ENCODE measurements at regions of chr7 and their contacts with region 1.

Region 1: DNA sequence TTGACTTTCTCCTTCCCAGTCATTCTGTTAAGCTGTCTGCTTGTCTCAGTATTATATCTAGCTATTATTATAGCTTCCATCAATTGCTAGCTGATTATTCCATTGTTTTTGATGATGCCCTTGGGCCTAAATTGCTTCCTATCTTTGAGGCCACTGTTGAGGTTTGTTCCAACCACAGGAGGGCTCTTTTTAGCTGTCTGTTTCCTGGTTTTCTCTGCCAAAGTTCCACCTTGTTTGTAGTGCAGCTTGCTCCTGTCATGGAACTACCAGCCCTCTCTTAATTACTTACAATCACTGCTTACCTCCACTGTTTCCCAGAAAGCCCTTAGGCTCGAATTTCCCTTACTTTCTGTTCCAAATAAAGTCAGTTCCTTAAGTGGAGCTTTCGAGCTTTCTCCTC is 118.7 kb upstream of the SEC61G start:
- DNase-seq: peak; percentile 39
- H3K4me3 Mint-ChIP-seq: no peak overlapping the region
- H3K27ac Mint-ChIP-seq: no peak overlapping the region
- H3K4me1 Mint-ChIP-seq: peaks cover 19% of the 10 kb centered on the region
- H3K27me3 Mint-ChIP-seq: no peaks in the 10 kb centered on the region
- CTCF ChIP-seq: peak; percentile 26

Region 2: GRCh38 chr7:54904130-54904529 is 26.4 kb after region 1 on chr7:
- CTCF ChIA-PET with region 1: interaction called, 12 read pairs
- POLR2A ChIA-PET with region 1: no interaction called
- intact Hi-C with region 1: no loop called
- DNase-seq: peak; percentile 39
- H3K4me3 Mint-ChIP-seq: no peak overlapping the region
- H3K27ac Mint-ChIP-seq: peak overlapping the region; percentile 25
- H3K4me1 Mint-ChIP-seq: peaks cover 8% of the 10 kb centered on the region
- H3K27me3 Mint-ChIP-seq: no peaks in the 10 kb centered on the region
- CTCF ChIP-seq: no peak

Region 3: DNA sequence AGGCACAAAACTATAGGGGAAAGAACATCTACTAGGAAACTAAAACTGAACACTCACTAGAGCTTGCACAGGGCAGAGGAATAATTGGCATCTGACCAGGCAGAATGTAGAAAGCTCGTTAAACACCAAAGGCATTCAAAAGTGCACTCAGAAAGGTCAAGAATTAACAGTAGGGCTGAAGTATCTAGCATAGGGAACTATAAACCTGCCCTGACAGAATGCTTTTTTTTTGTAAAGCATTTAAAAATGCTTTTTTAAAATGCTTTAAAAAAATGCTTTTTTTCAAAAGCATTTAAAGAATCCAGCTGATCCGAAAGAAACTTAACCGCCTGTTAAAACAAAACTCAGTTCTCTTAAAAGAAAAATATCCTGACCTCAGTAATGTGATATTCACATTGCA is 66.5 kb after region 1 on chr7:
- CTCF ChIA-PET with region 1: interaction called, 10 read pairs
- POLR2A ChIA-PET with region 1: interaction called, 11 read pairs
- intact Hi-C with region 1: no loop called
- DNase-seq: peak; percentile 21
- H3K4me3 Mint-ChIP-seq: no peak overlapping the region
- H3K27ac Mint-ChIP-seq: peak overlapping the region; percentile 4
- H3K4me1 Mint-ChIP-seq: peaks cover 24% of the 10 kb centered on the region
- H3K27me3 Mint-ChIP-seq: no peaks in the 10 kb centered on the region
- CTCF ChIP-seq: no peak

Region 4: GRCh38 chr7:55048221-55048859 is 170.7 kb after region 1 on chr7:
- CTCF ChIA-PET with region 1: interaction called, 10 read pairs
- POLR2A ChIA-PET with region 1: no interaction called
- intact Hi-C with region 1: no loop called
- DNase-seq: peak; percentile 86
- H3K4me3 Mint-ChIP-seq: no peak overlapping the region
- H3K27ac Mint-ChIP-seq: peak overlapping the region; percentile 49
- H3K4me1 Mint-ChIP-seq: peaks cover 66% of the 10 kb centered on the region
- H3K27me3 Mint-ChIP-seq: no peaks in the 10 kb centered on the region
- CTCF ChIP-seq: no peak

Region 5: DNA sequence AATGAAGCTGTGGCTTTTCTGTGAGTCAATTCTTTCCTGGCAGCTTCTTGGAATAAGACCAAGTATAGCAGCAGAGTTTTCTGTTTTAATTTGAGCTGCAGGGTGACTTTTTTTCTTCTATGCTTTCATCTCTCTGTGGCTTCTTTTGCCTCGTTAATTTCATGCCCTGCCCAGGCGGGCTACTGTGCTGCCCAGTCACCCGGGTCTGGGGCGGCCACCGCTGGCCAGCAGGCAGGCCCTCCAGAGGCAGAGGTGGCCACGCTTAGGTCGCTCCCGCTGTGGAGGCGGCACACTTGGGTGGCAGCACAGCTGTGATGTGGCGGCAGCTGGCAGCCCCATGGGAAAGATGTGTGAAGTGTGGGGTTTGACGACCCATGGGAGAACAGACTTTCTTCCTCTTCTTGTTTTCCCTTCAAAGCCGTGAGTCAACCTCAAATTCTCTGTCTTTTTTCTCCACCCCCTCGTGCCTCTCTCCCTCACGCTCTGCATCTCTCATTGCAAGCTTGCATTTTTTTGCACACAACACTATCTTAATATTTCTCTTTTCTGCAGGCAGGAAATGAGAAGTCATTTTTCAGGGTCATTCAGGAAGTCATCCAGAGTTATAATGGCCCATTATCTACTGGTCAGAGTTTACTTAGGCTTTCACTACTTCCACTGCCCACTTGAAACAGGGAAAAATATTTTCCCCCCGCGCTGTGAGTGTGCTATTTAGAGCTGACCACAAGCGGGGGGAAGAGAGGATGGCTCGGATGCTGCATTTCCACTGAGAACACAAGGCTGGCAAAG is 208.9 kb after region 1 on chr7:
- CTCF ChIA-PET with region 1: interaction called, 10 read pairs
- POLR2A ChIA-PET with region 1: interaction called, 3 read pairs
- intact Hi-C with region 1: no loop called
- DNase-seq: peak; percentile 78
- H3K4me3 Mint-ChIP-seq: peak overlapping the region; percentile 68
- H3K27ac Mint-ChIP-seq: peak overlapping the region; percentile 54
- H3K4me1 Mint-ChIP-seq: peaks cover 58% of the 10 kb centered on the region
- H3K27me3 Mint-ChIP-seq: no peaks in the 10 kb centered on the region
- CTCF ChIP-seq: no peak